AG04450 (cell line): ENCODE measurements at regions of chr4 and their contacts with region 1.

Region 1: GRCh38 chr4:145618932-145619638 is at the start of gene MMAA:
- DNase-seq: peak; percentile 77
- H3K4me3 ChIP-seq: peak within 1 kb of the TSS; percentile 89
- H3K27ac ChIP-seq: peak within 1 kb of the TSS; percentile 88
- H3K27me3 ChIP-seq: no peaks in the 10 kb centered on the region
- CTCF ChIP-seq: peak; percentile 68
- polyA plus RNA-seq, gene MMAA: 7.2 and 8.8 TPM in 2 replicates

Region 2: DNA sequence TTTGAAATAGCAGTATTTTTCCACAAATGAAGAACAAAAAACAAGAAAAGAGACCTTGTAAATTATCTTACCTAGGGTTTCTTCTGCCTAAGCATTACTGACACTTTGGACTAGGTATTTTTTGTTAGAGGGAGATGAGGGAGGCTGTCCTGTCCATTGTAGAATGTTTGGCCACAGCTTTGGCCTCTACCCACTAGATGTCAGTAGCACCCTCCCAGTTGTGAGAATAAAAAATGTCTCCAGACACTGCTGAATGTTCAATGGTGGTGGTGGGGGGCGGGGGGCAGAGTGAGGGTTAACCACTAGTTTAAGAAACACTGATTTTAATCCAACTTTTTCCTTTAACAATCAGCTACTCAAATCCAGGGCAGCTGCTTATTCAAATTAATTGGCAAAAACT is 464.5 kb before region 1 on chr4:
- CTCF ChIA-PET with region 1: interaction called, 15 read pairs
- POLR2A ChIA-PET with region 1: no interaction called
- DNase-seq: no peak
- H3K4me3 ChIP-seq: no peak overlapping the region
- H3K27ac ChIP-seq: no peak overlapping the region
- H3K27me3 ChIP-seq: no peaks in the 10 kb centered on the region
- CTCF ChIP-seq: peak; percentile 59

Region 3: DNA sequence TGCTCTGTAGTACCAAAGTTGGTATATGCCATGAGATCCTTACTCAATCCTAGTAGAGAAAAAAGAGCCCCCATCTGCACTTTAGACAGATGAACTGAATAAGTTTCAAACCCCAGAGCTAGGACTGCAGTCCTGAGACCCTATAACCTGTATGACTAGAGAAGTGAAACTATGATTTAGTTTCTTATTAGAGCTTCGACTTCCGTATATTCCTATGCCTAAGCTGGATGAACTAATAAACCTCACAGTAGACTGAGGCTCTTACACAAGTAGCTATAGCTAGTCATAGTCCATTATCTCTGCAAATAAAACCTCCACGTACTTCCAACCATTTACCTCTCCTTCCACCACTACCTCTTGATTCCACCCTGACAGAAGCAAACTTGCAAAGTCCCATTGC is 432.4 kb before region 1 on chr4:
- CTCF ChIA-PET with region 1: interaction called, 18 read pairs
- POLR2A ChIA-PET with region 1: no interaction called
- DNase-seq: no peak
- H3K4me3 ChIP-seq: no peak overlapping the region
- H3K27ac ChIP-seq: no peak overlapping the region
- H3K27me3 ChIP-seq: peaks cover 3% of the 10 kb centered on the region
- CTCF ChIP-seq: no peak

Region 4: GRCh38 chr4:145234091-145234706 is 384.9 kb before region 1 on chr4:
- CTCF ChIA-PET with region 1: interaction called, 31 read pairs
- POLR2A ChIA-PET with region 1: no interaction called
- DNase-seq: peak; percentile 34
- H3K4me3 ChIP-seq: no peak overlapping the region
- H3K27ac ChIP-seq: no peak overlapping the region
- H3K27me3 ChIP-seq: no peaks in the 10 kb centered on the region
- CTCF ChIP-seq: peak; percentile 95

Region 5: GRCh38 chr4:145404761-145405160 is 214.3 kb before region 1 on chr4:
- CTCF ChIA-PET with region 1: no interaction called
- POLR2A ChIA-PET with region 1: no interaction called
- DNase-seq: no peak
- H3K4me3 ChIP-seq: no peak overlapping the region
- H3K27ac ChIP-seq: no peak overlapping the region
- H3K27me3 ChIP-seq: no peaks in the 10 kb centered on the region
- CTCF ChIP-seq: no peak

Region 6: DNA sequence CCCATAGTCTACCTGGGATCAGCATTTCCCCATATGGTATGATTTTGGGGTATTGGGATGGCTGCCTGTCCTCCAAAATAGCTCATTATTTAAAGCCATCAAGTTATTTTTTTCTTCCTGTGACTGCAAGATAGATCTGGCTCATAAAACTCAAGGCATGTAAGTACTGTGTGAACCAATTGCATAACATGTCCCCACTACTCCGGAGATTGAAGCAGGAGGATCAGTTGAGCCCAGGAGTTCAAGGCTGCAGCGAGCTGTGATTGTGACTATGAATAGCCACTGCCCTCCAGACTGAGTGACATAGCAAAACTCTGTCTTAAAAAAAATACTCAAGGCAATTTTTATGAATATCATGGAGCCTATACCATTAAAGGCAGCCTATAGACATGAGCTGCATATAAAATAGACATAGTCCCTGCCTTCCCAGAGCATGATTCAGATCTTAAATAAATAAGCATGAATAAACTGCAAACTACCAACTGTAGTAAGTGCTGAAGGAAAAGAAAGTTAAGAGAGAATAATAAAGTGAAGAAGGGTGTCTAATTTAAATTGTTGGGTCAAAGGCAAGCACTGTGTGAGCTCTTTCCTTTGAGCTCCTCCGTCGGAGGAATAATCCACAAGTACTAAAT is 16.8 kb before region 1 on chr4:
- CTCF ChIA-PET with region 1: interaction called, 13 read pairs
- POLR2A ChIA-PET with region 1: no interaction called
- DNase-seq: no peak
- H3K4me3 ChIP-seq: no peak overlapping the region
- H3K27ac ChIP-seq: no peak overlapping the region
- H3K27me3 ChIP-seq: no peaks in the 10 kb centered on the region
- CTCF ChIP-seq: no peak